Posterior vena cava (tissue), 2 donors: ENCODE measurements at regions of chr6 and their contacts with region 1.

Region 1: DNA sequence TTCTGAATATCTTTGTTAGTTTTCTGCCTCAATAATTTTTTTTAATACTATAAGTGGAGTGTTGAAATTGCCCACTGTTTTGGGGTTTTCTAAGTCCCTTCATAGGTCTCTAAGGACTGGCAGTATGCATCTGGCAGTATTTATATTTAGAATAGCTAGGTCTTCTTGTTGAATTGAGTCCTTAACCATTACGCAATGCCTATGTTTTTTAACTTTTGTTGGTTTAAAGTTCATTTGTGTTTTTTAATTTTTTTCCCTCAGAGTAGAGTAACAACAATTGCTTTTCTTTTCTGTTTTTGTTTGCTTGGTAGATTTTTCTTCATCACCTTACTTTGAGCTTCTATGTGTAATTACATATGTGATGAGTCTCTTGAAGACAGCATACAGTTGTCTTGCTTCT is 375.9 kb upstream of the EYS start:
- DNase-seq: no peak

Region 2: DNA sequence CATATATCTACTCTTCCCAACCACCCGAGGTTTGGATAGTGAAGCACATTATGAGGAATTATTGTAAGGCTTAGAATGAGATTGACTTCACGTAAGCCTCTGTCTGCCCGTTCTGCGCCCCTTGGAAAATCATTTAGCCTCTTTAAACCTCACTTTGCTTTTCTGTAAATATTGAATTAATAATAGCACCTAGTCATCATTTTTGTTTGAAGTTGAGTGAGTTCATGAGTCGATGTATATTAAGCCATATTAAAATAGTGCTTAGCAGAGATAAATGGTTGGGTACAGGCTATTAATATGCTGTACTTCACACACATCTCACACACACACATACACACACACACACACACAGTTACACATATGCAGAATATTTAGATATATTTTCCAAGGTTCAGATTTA is 31.1 kb before region 1 on chr6:
- intact Hi-C with region 1: loop called in 1 of 2 experiments (anchors 2 kb)
- DNase-seq: no peak

Region 3: DNA sequence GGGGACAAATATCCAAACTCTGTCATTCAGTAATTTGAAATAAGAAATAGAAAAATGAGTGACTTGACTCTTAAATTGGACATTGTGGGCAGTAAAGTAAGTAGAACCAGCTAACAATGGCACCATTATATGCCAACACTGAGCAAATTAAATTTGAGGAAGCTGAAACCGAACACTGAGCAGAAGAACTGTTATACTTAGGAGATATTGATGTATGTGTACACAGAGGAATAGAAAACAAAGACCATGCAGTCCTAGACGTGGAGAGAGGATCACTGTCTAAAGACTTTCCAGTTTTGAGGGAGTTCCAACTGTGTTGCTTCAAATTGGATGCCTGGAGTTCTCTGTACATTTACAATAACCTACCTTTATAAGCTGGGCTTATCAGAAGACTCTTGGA is 51.1 kb after region 1 on chr6:
- intact Hi-C with region 1: no loop called
- DNase-seq: no peak